Dendritic cell treated with granulocyte-macrophage colony-stimulating factor and Interleukin-4, amounts not matched to agents 40 ng/mL and 50 ng/mL, for 4 days (primary cell): ENCODE measurements at regions of chr19 and their contacts with region 1.

Region 1: GRCh38 chr19:42184401-42184861 is 33.0 kb downstream of the DEDD2 start:
- H3K4me3 Mint-ChIP-seq: no peak overlapping the region
- H3K27ac Mint-ChIP-seq: peak overlapping the region; percentile 83
- H3K4me1 Mint-ChIP-seq: peaks cover 54% of the 10 kb centered on the region
- H3K27me3 Mint-ChIP-seq: peaks cover 7% of the 10 kb centered on the region

Region 2: GRCh38 chr19:42092350-42092749 is 92.1 kb before region 1 on chr19:
- intact Hi-C with region 1: no loop called
- H3K4me3 Mint-ChIP-seq: no peak overlapping the region
- H3K27ac Mint-ChIP-seq: no peak overlapping the region
- H3K4me1 Mint-ChIP-seq: peaks cover 38% of the 10 kb centered on the region
- H3K27me3 Mint-ChIP-seq: no peaks in the 10 kb centered on the region

Region 3: GRCh38 chr19:42132851-42133528 is 51.4 kb before region 1 on chr19:
- intact Hi-C with region 1: loop called (anchors 1 kb)
- H3K4me3 Mint-ChIP-seq: peak overlapping the region; percentile 89
- H3K27ac Mint-ChIP-seq: peak overlapping the region; percentile 58
- H3K4me1 Mint-ChIP-seq: peaks cover 65% of the 10 kb centered on the region
- H3K27me3 Mint-ChIP-seq: no peaks in the 10 kb centered on the region

Region 4: DNA sequence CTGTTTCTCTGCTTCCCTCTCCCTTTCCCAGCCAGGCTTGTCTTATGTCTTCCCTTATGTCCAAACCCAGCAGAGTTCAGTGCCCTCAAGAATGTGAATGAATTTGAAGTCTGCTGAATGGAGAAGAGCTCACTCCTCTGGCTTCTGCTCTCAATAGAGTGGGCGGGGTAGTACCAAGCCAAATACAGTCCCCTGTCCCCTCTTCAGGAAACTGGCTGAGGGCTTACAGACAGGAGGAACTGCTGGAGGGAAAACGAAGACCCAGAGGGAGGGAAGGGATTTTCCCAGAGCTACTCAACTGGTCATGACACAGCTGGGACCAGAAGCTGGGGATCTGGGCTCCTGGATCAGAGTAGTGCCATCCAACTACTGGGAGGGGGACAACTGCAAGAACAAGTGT is 19.3 kb before region 1 on chr19:
- intact Hi-C with region 1: loop called (anchors 1 kb)
- H3K4me3 Mint-ChIP-seq: no peak overlapping the region
- H3K27ac Mint-ChIP-seq: no peak overlapping the region
- H3K4me1 Mint-ChIP-seq: peaks cover 9% of the 10 kb centered on the region
- H3K27me3 Mint-ChIP-seq: peaks cover 30% of the 10 kb centered on the region

Region 5: GRCh38 chr19:42199440-42200115 is 15.1 kb after region 1 on chr19:
- intact Hi-C with region 1: loop called (anchors 2 kb)
- H3K4me3 Mint-ChIP-seq: peak overlapping the region; percentile 73
- H3K27ac Mint-ChIP-seq: peak overlapping the region; percentile 89
- H3K4me1 Mint-ChIP-seq: peaks cover 84% of the 10 kb centered on the region
- H3K27me3 Mint-ChIP-seq: no peaks in the 10 kb centered on the region

Region 6: DNA sequence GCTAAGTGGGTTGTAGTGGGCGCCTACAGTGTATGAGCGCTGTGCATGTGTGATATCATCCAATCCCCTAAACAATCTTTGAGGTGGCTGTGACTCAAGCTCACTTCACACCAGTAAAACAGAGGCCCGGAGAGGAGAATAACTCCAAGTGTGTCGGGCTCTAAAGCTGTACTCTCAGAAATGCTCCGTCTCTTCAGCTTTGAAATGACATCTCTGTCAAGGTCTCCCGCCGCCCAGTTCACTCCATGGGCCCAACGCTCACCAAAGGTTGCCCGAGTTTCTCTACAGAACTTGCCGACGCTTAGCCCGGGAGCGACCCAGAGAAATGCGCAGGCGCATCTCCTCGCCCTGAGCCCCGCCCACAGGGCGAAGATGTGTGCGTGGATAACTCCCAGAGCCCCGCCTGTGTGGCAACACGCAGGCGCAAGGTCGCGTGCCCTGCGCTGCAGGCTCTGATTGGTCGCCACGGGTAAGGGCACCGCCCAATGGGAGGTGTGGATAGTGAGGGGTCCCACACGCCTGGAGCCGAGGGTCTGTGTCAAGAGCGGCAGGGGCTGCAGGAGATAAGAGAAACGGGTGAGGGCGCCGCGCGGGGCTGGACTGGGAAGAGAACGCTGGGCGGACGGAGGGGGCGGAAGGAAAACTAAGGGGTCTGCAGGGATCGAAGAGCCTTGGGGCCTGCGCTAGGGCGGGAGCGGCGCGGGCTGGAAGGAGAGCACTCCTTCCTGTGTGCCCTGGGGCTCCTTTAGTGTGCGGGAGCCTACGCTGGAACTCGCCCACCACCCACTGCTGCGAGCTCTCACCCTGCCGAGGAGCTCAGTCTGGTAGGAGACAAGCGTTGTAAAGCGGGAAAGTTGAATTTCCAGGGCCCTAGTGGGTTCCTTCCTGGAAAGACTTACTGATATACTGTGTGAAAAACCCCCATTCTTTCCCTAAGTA is 35.6 kb after region 1 on chr19 and contains the start of gene ZNF526:
- intact Hi-C with region 1: loop called (anchors 2 kb)
- H3K4me3 Mint-ChIP-seq: peak within 1 kb of the TSS; percentile 94
- H3K27ac Mint-ChIP-seq: peak within 1 kb of the TSS; percentile 85
- H3K4me1 Mint-ChIP-seq: peaks cover 55% of the 10 kb centered on the region
- H3K27me3 Mint-ChIP-seq: no peaks in the 10 kb centered on the region

Region 7: DNA sequence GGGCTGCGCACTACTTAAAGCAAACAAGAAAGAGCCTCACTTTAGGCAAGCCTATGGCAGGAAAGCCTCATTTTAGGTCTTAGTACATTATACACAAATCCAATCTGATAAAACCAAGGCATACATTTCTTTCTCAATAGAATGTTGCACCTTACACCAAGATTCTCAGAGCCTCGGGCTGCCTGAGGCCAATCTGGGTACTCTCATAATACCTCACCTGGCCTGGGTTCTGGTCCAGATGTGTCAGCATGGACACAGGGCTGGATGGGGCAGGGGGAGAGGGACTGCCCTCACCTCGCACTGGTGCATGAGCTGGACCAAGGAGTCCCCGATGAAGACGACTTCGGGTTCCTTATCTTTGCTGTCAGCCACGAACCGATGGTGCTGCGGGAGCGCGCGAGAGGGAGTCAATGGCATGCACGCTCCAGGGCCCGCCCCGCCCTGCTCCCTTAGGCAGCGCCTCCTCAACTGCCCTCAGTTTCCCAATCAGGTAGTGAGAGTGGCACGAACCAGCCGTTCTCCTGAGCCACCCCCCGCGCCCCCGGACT is 117.3 kb after region 1 on chr19 and contains the start of gene PRR19:
- intact Hi-C with region 1: no loop called
- H3K4me3 Mint-ChIP-seq: peak within 1 kb of the TSS; percentile 89
- H3K27ac Mint-ChIP-seq: peak within 1 kb of the TSS; percentile 75
- H3K4me1 Mint-ChIP-seq: peaks cover 29% of the 10 kb centered on the region
- H3K27me3 Mint-ChIP-seq: peaks cover 8% of the 10 kb centered on the region